Endothelial cell of umbilical vein (primary cell): ENCODE measurements at regions of chr2 and their contacts with region 1.

Region 1: DNA sequence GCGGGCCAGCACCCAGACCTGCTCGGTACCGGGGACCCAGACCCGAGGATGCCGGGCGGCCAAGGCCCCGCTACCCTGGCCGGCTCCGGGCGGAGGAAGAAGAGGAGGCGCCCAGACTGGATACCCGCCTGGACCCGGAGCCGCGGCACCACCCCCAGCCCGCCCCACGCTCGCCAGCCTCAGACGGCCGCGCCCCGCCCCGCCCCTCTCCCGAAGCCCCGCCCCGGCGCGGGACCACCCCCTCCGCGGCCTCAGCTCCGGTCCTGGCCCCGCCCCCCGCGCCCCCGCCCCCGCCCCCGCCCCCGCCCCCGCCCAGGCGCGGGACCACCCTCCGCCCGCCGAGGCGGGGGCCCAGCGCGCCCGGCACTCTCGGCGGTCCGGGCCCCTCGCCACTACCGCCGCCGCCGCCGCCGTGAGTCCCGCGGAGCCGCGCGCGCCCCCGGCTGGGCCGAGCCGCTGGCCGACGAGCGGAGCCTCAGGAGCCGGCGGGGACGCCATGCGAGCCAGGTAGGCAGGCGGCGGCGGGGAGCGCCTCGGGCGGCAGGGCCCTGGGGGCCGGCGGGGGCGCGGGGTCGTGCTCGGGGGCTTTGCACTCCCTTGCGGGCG is at the start of gene SH3BP4:
- DNase-seq: peak; percentile 64
- H3K4me3 ChIP-seq: peak within 1 kb of the TSS; percentile 87 to 95 (median 94)
- H3K27ac ChIP-seq: peak within 1 kb of the TSS; percentile 92
- H3K4me1 ChIP-seq: peaks cover 28% of the 10 kb centered on the region
- H3K27me3 ChIP-seq: no peaks in the 10 kb centered on the region
- CTCF ChIP-seq: no peak
- POLR2A ChIP-seq: peak; percentile 60
- total RNA-seq, gene SH3BP4: 100.0 and 105 TPM in 2 replicates

Region 2: GRCh38 chr2:233976690-233977294 is 975.0 kb before region 1 on chr2:
- CTCF ChIA-PET with region 1: no interaction called
- POLR2A ChIA-PET with region 1: no interaction called
- dilution Hi-C with region 1: no loop called
- intact Hi-C with region 1: loop called (anchors 10 kb)
- DNase-seq: peak; percentile 57
- H3K4me3 ChIP-seq: no peak overlapping the region
- H3K27ac ChIP-seq: no peak overlapping the region
- H3K4me1 ChIP-seq: peaks cover 13% of the 10 kb centered on the region
- H3K27me3 ChIP-seq: peaks cover 0 to 3% of the 10 kb centered on the region in 2 experiments
- CTCF ChIP-seq: peak; percentile 4 to 22
- POLR2A ChIP-seq: no peak

Region 3: GRCh38 chr2:234620018-234620417 is 331.7 kb before region 1 on chr2:
- CTCF ChIA-PET with region 1: no interaction called
- POLR2A ChIA-PET with region 1: no interaction called
- dilution Hi-C with region 1: no loop called
- intact Hi-C with region 1: loop called (anchors 1 kb)
- DNase-seq: peak; percentile 84
- H3K4me3 ChIP-seq: no peak overlapping the region
- H3K27ac ChIP-seq: no peak overlapping the region
- H3K4me1 ChIP-seq: peaks cover 20% of the 10 kb centered on the region
- H3K27me3 ChIP-seq: peaks cover 34 to 41% of the 10 kb centered on the region in 2 experiments
- CTCF ChIP-seq: no peak
- POLR2A ChIP-seq: peak; percentile 73

Region 4: DNA sequence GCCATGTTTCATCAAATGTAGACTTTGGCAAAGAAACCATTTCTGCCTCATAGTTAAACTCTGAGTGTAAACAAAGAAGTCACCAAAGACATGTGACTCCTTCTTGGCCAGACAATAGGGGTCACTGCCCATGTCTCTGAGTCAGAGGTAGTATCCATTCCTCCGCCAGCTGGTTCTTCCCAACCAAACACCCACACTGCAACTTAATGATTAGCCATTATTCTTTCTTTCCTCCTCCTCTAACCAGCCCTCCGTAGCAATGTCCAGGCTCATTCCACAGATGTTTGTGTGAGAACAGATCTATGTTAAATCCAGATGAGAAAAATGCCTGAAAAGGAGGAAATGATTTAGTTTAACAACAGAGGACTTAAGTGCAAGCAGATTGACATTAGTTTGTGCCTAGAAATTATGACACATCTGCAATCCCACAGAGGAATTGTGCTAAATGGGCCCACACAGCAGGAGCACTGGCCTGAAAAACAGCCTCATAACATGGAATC is 127.8 kb before region 1 on chr2:
- CTCF ChIA-PET with region 1: interaction called, 4 read pairs
- POLR2A ChIA-PET with region 1: no interaction called
- dilution Hi-C with region 1: no loop called
- intact Hi-C with region 1: loop called (anchors 1 kb)
- DNase-seq: peak; percentile 98
- H3K4me3 ChIP-seq: no peak overlapping the region
- H3K27ac ChIP-seq: peak overlapping the region; percentile 90
- H3K4me1 ChIP-seq: peaks cover 24% of the 10 kb centered on the region
- H3K27me3 ChIP-seq: no peaks in the 10 kb centered on the region
- CTCF ChIP-seq: no peak
- POLR2A ChIP-seq: peak; percentile 69

Region 5: GRCh38 chr2:234853729-234854128 is 98.0 kb before region 1 on chr2:
- CTCF ChIA-PET with region 1: no interaction called
- POLR2A ChIA-PET with region 1: no interaction called
- dilution Hi-C with region 1: no loop called
- intact Hi-C with region 1: no loop called
- DNase-seq: no peak
- H3K4me3 ChIP-seq: no peak overlapping the region
- H3K27ac ChIP-seq: no peak overlapping the region
- H3K4me1 ChIP-seq: no peaks in the 10 kb centered on the region
- H3K27me3 ChIP-seq: no peaks in the 10 kb centered on the region
- CTCF ChIP-seq: no peak
- POLR2A ChIP-seq: no peak

Region 6: DNA sequence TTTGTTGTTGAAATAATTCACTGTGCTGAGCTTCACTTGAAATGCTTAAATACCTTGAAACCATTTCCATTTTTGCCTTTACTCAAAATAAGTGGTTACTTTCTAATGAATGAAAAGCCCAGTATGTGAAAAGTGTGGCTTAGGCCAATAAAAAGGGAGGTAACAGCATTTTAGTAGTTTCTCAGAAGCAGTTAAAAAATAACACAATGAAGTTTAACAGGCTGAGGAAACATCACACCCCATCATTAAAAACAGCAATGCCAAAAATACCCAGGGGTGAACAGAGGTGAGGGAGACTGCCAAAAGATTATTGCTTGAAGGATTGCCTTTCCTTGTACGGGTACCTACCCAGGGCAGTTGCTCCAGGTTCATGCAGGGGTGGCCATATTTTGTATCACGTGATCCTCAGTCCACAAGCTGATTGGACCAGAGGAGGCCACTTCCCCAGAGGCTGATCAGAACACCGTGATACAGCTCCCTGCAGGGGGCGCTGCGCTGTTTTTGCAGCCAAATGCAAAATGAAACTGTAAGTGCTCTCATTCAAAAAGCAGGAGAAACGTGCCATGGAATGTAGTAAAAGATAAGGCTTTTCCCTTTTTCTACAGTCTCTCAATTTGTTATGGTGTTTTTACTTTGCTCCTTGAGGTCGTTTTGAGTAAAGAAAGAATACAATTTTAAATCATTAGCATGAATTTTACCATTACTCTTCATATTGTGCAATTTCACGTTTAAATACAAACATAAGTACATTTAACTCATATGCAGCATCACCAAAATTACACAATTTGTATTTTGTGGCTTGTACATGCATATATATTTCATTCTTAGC is 70.1 kb before region 1 on chr2:
- CTCF ChIA-PET with region 1: interaction called, 12 read pairs
- POLR2A ChIA-PET with region 1: interaction called, 3 read pairs
- dilution Hi-C with region 1: no loop called
- intact Hi-C with region 1: loop called (anchors 1 kb)
- DNase-seq: peak; percentile 92
- H3K4me3 ChIP-seq: peak overlapping the region in 1 of 3 experiments; percentile 12
- H3K27ac ChIP-seq: peak overlapping the region; percentile 79
- H3K4me1 ChIP-seq: peaks cover 23% of the 10 kb centered on the region
- H3K27me3 ChIP-seq: no peaks in the 10 kb centered on the region
- CTCF ChIP-seq: peak; percentile 87 to 91
- POLR2A ChIP-seq: peak; percentile 23

Region 7: GRCh38 chr2:235026649-235027557 is 75.1 kb after region 1 on chr2:
- CTCF ChIA-PET with region 1: no interaction called
- POLR2A ChIA-PET with region 1: no interaction called
- dilution Hi-C with region 1: no loop called
- intact Hi-C with region 1: loop called (anchors 2 kb)
- DNase-seq: peak; percentile 21
- H3K4me3 ChIP-seq: no peak overlapping the region
- H3K27ac ChIP-seq: peak overlapping the region; percentile 76
- H3K4me1 ChIP-seq: peaks cover 60% of the 10 kb centered on the region
- H3K27me3 ChIP-seq: no peaks in the 10 kb centered on the region
- CTCF ChIP-seq: no peak
- POLR2A ChIP-seq: no peak